Activated naive CD4-positive, alpha-beta T cell treated with anti-CD3 and anti-CD28 coated beads for 36 hours (primary cell): ENCODE measurements at regions of chr1 and their contacts with region 1.

Region 1: GRCh38 chr1:66725885-66726665 is 26.2 kb upstream of the DYNLT5 start:
- DNase-seq: peak; percentile 78
- H3K4me3 Mint-ChIP-seq: no peak overlapping the region
- H3K27ac Mint-ChIP-seq: no peak overlapping the region
- H3K4me1 Mint-ChIP-seq: peaks cover 14% of the 10 kb centered on the region
- H3K27me3 Mint-ChIP-seq: peaks cover 4% of the 10 kb centered on the region

Region 2: DNA sequence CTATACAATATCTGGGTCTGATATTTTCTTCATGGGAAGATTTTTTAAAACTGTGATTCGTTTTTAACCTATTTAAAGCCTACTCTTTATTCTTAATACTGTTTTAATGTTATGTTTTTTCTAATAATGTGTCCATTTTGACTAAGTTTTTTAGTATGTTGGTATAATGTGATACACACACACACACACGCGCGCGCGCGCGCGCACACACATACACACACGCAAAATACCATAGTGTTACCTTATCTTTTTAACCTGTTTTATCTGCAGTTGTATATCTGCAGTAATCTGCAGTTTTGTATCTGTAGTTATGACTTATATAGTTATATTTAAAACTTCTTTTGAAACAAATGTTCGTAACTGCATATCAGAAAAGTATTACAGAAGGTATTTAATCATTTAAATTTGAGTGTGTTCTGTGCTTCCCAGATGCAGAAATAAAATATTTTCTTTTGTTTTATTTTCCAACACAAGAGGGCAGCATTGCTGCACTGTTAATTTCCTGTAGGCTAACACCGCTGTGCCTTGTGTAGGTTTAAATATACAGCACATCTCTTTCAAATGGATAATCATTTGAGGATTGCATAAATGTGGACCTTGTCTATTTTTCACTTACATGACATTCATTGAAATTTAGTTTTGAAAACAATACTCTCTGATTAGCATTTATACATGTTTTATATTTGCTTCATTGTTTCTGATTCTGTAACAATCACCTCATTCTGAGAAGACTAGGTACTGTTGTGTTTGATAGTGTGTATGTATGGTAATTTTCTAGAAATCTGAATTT is 767.3 kb before region 1 on chr1:
- CTCF ChIA-PET with region 1: no interaction called
- intact Hi-C with region 1: loop called (anchors 1 kb)
- DNase-seq: peak; percentile 27
- H3K4me3 Mint-ChIP-seq: no peak overlapping the region
- H3K27ac Mint-ChIP-seq: no peak overlapping the region
- H3K4me1 Mint-ChIP-seq: no peaks in the 10 kb centered on the region
- H3K27me3 Mint-ChIP-seq: no peaks in the 10 kb centered on the region

Region 3: GRCh38 chr1:66503841-66504470 is 222.1 kb before region 1 on chr1:
- CTCF ChIA-PET with region 1: interaction called, 6 read pairs
- intact Hi-C with region 1: loop called (anchors 1 kb)
- DNase-seq: peak; percentile 74
- H3K4me3 Mint-ChIP-seq: no peak overlapping the region
- H3K27ac Mint-ChIP-seq: no peak overlapping the region
- H3K4me1 Mint-ChIP-seq: no peaks in the 10 kb centered on the region
- H3K27me3 Mint-ChIP-seq: peaks cover 15% of the 10 kb centered on the region

Region 4: GRCh38 chr1:66607458-66607857 is 118.6 kb before region 1 on chr1:
- CTCF ChIA-PET with region 1: no interaction called
- intact Hi-C with region 1: loop called (anchors 1 kb)
- DNase-seq: peak; percentile 17
- H3K4me3 Mint-ChIP-seq: no peak overlapping the region
- H3K27ac Mint-ChIP-seq: no peak overlapping the region
- H3K4me1 Mint-ChIP-seq: no peaks in the 10 kb centered on the region
- H3K27me3 Mint-ChIP-seq: peaks cover 15% of the 10 kb centered on the region

Region 5: GRCh38 chr1:66924756-66925557 is 198.9 kb after region 1 on chr1 and contains the starts of genes DNAI4 and MIER1:
- CTCF ChIA-PET with region 1: no interaction called
- intact Hi-C with region 1: loop called (anchors 1 kb)
- DNase-seq: peak; percentile 98
- H3K4me3 Mint-ChIP-seq: peak within 1 kb of the TSS; percentile 92
- H3K27ac Mint-ChIP-seq: peak within 1 kb of the TSS; percentile 95
- H3K4me1 Mint-ChIP-seq: peaks cover 50% of the 10 kb centered on the region
- H3K27me3 Mint-ChIP-seq: no peaks in the 10 kb centered on the region
- total RNA-seq, gene DNAI4: 0.83 to 1.5 TPM
- total RNA-seq, gene MIER1: 56.5 to 58.3 TPM